GM18951 (cell line): ENCODE measurements at regions of chr1 and their contacts with region 1.

Region 1: DNA sequence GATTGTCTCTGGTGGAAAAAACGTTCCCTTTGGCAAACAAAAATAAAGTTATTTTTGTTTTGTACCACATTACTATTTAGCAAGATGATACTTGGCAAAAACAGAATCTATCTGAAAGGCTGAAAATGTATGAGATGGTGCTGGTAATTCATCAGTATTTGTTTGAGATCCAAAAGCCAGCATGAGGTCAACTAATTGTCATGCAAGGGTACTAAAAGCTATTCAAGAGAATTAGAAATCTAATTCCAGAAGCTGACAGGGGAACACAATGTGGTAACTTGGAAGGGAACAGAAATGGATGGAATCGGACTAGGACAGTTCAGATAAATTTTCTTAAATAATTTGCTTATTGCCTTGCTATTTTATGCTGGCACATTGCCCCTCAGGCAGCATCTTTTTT is 263.8 kb downstream of the KCNT2 start:
- POLR2A ChIP-seq: no peak

Region 2: DNA sequence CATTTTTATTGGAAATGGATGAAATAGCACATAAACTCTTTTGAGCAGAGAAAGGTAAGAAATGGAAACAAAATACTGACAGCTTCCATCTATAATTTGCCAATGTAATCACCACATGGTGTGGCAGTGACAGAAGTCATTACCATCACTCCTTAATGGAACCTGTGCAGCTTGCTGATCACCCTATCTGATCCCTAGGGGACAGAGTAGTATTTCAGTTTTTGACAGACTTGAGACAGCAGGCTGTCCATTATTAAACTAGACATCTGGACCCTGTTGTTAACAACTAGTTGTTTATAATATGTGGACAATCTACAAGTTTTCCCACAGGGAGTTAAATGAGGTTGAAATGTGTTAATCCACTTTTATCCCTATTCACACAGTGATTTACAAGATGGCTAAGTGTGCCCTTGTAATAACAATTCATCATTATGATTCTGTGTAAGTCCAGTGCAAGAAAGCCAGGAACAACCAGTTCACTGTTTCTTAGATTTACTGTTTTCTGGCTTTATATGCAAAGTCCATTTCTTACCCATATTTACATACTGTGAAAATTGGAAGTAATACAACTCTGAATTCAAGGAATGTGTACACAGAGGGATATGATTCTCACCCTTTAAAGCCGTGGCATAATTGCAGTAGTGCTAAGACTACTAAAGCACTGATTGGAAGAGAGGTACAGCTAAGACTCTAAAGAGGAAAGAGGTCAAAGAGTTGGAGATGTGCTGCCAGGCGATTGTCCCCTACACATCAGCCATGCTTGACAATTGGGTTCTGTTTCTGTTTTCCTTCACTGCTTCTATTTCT is 254.7 kb after region 1 on chr1:
- in situ Hi-C with region 1: no loop called
- POLR2A ChIP-seq: no peak

Region 3: DNA sequence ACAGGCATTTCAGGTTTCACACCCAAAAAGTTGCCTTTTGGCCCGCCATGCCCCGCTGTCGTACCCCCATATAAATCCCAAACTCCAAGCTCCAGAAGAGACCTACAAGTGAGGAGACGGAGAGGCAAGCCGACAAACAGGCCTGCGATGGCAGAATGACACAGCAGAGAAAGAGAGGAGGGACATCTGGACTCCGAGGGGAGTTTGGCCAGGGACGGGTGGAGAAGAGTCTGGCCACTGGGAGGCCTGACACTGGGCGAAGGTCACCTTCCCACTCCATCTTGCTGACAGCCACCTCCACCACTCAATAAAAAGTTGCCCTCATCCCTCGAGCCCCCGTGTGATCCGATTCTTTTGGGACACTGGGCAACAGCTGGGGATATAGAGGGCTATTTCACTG is 305.5 kb after region 1 on chr1:
- in situ Hi-C with region 1: loop called (anchors 25 kb)
- POLR2A ChIP-seq: no peak